Thyroid gland (tissue), 4 donors: ENCODE measurements at regions of chr18 and their contacts with region 1.

Region 1: DNA sequence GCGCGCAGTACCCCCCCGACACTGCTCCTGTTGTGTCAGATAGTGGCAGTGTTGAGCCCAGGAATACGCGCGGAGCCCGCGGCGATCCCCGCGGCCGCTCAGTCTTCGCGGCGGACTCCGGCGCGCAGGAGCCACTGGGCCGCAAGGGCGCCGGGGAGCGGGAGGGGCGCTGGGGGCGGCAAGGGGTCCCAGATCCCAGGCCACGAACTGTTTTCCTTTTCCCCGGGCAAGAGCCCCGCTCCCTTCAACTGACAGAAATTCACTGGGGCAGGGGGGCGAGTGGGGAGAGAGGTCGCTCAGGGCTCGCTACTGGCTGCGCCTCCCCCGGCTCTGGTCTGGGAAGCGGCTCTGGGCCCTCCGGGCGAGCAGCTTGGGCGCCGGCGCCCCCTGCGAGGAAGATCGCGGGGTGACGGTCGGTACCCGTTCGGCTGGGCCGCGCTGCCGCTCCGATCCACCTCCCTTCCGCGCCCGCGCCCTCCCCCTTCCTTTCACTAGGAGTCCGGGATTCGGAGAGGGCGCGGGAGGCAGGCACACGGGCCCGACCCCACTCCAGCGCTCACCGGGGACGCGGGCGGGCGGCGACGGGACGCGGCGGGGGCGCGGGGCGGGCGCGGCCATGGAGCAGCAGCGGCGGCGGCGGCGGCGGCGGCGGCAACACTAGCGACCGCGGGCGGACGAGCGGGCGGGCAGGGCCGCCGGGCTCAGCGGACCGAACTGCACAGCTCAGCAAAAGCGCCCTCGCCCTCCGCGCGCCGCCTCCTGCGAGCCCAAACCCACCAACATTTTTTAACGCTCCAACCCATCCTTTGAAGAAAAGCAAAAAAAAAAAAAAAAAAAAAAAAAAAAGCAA is 1.4 kb upstream of the SETBP1 start:
- DNase-seq: peak; percentile 90
- H3K4me3 ChIP-seq: peak overlapping the region; percentile 38 to 82 (median 77)
- H3K27ac ChIP-seq: peak overlapping the region; percentile 96 to 97 (median 97)
- H3K4me1 ChIP-seq: peaks cover 7 to 14% of the 10 kb centered on the region in 2 donors
- H3K27me3 ChIP-seq: no peaks in the 10 kb centered on the region
- CTCF ChIP-seq: peak; percentile 57 to 73 (median 68)
- POLR2A ChIP-seq: peak; percentile 24 to 83

Region 2: GRCh38 chr18:44826418-44827259 is 147.4 kb after region 1 on chr18:
- intact Hi-C with region 1: loop called (anchors 10 kb)
- DNase-seq: peak; percentile 90 to 91
- H3K4me3 ChIP-seq: no peak overlapping the region
- H3K27ac ChIP-seq: peak overlapping the region; percentile 84 to 91 (median 85)
- H3K4me1 ChIP-seq: peaks cover 24 to 30% of the 10 kb centered on the region in 2 donors
- H3K27me3 ChIP-seq: no peaks in the 10 kb centered on the region
- CTCF ChIP-seq: no peak
- POLR2A ChIP-seq: peak in 1 of 2 donors; percentile 39

Region 3: DNA sequence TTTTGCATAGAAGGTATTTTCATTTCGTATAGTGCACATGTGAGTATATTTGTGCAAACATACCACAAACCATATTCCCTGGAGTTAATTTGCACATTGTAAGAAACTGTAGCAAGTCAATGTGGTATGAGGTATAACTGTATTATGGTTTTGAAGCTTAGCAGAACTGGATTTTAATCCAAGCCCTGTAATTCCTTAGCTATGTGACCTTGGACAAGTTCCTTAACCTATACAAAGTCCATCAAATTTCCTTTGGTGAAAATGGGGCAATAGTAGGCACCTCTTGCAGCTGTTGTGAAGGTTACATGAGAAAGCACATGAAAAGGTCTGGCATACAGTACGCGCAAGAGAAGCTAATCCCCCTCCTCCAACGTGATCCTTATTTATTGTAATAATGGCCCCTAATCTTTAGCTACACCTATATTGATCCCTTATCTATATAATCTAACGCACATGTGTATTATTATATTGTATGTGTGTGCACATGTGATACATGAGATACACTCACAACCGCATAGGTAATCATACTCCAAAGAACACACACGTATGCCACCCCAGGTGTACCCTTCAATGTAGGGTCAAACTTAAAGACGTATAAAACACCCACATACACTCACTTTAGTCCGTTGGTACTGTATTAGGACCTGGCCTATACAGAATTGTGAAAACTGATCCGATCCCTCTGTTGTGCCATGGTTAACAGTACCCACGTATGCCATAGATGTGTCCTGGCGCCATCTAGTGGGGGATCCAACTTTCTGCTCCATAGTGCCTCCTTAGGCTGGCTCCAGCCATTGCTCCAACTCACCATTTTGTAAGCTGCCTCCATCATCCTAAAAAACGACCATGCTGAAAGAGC is 533.1 kb after region 1 on chr18:
- intact Hi-C with region 1: loop called (anchors 5 kb)
- DNase-seq: peak; percentile 85 to 87
- H3K4me3 ChIP-seq: no peak overlapping the region
- H3K27ac ChIP-seq: no peak overlapping the region
- H3K4me1 ChIP-seq: no peaks in the 10 kb centered on the region
- H3K27me3 ChIP-seq: no peaks in the 10 kb centered on the region
- CTCF ChIP-seq: peak; percentile 78 to 99 (median 94)
- POLR2A ChIP-seq: no peak